A549 (cell line): ENCODE measurements at regions of chr2 and their contacts with region 1.

Region 1: DNA sequence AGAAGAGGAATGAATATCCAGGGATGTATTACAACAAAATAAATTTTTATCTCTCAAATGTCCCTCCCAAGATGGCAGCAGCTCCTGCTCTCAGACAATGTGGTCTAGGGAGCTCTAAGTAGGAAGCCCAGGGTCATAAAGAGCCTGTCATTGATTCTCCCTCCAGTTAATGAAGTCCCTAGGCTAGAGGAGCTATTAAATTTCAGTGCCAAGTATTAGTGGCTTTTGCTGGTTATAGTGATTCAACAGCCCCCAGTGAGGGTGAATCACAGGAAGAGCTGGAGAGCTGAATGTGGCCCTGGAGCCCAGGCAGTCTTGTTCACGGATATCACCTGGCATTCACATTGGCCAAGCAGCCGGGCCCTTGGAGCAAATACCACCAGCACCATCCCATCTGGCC is 109.8 kb upstream of the YPEL5 start:
- DNase-seq: no peak
- ATAC-seq: 0 out of 6 replicates have a peak, but pooled peaks of 1 of the 2 experiments have one; percentile 20
- H3K4me3 ChIP-seq: no peak overlapping the region
- H3K27ac ChIP-seq: no peak overlapping the region
- H3K4me1 ChIP-seq: no peaks in the 10 kb centered on the region
- CTCF ChIP-seq: no peak
- EP300 ChIP-seq: no peak
- POLR2A ChIP-seq: no peak
- RAD21 ChIP-seq: no peak

Region 2: GRCh38 chr2:29829841-29830240 is 207.2 kb before region 1 on chr2:
- CTCF ChIA-PET with region 1: no interaction called
- POLR2A ChIA-PET with region 1: no interaction called
- DNase-seq: no peak
- ATAC-seq: no peak
- H3K4me3 ChIP-seq: no peak overlapping the region
- H3K27ac ChIP-seq: no peak overlapping the region
- H3K4me1 ChIP-seq: no peaks in the 10 kb centered on the region
- CTCF ChIP-seq: no peak
- EP300 ChIP-seq: no peak
- POLR2A ChIP-seq: no peak
- RAD21 ChIP-seq: no peak

Region 3: DNA sequence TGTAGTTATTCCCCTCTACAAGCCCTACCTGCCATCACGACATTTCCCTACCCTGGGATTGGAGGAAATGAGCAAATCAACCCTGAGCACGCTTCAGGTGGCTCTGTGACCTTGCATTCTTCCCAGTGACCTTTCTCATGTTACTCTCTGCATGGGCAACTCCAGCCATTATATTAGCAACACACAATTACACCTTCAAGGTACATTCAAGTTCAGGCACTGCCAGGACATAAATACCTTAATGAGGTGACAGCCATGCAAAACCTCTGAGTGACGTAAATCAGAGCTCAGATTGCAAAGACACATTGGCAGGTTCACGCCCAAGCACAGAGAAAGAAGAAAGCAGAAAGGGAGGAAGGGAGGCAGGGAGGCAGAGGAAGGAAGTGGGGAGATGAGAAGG is 46.9 kb before region 1 on chr2:
- CTCF ChIA-PET with region 1: no interaction called
- POLR2A ChIA-PET with region 1: no interaction called
- DNase-seq: no peak
- ATAC-seq: no peak
- H3K4me3 ChIP-seq: no peak overlapping the region
- H3K27ac ChIP-seq: no peak overlapping the region
- H3K4me1 ChIP-seq: no peaks in the 10 kb centered on the region
- CTCF ChIP-seq: no peak
- EP300 ChIP-seq: no peak
- POLR2A ChIP-seq: no peak
- RAD21 ChIP-seq: no peak

Region 4: GRCh38 chr2:30026087-30027055 is 10.6 kb before region 1 on chr2:
- CTCF ChIA-PET with region 1: interaction called, 21 read pairs
- POLR2A ChIA-PET with region 1: no interaction called
- DNase-seq: peak; percentile 50 to 76
- ATAC-seq: peak; percentile 88 to 96
- H3K4me3 ChIP-seq: no peak overlapping the region
- H3K27ac ChIP-seq: no peak overlapping the region
- H3K4me1 ChIP-seq: no peaks in the 10 kb centered on the region
- CTCF ChIP-seq: peak; percentile 72
- EP300 ChIP-seq: no peak
- POLR2A ChIP-seq: no peak
- RAD21 ChIP-seq: peak; percentile 80 to 86

Region 5: GRCh38 chr2:30048636-30049180 is 11.7 kb after region 1 on chr2:
- CTCF ChIA-PET with region 1: interaction called, 13 read pairs
- POLR2A ChIA-PET with region 1: no interaction called
- DNase-seq: no peak
- ATAC-seq: no peak
- H3K4me3 ChIP-seq: no peak overlapping the region
- H3K27ac ChIP-seq: no peak overlapping the region
- H3K4me1 ChIP-seq: no peaks in the 10 kb centered on the region
- CTCF ChIP-seq: no peak
- EP300 ChIP-seq: no peak
- POLR2A ChIP-seq: no peak
- RAD21 ChIP-seq: no peak

Region 6: DNA sequence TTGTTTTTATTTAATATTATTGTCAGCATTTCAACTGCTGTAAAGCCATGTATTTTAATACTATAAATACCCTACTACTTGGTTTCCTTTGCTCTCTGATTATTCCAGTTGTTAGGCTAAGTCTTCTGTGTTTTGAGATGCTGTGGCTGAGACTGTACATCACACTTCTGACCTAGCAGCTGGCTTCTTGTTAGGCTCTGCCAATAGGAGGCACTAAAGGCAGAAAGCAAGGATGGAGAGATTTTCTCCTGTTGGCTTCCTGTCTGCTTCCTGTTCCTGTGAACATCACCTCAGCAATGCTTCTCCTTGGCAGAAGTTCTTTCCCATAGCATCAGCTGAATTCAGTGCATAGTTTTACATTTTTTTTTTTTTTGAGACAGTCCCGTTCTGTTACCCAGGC is 41.5 kb after region 1 on chr2:
- CTCF ChIA-PET with region 1: no interaction called
- POLR2A ChIA-PET with region 1: no interaction called
- DNase-seq: no peak
- ATAC-seq: 0 out of 6 replicates have a peak, but pooled peaks of 1 of the 2 experiments have one; percentile 34
- H3K4me3 ChIP-seq: no peak overlapping the region
- H3K27ac ChIP-seq: no peak overlapping the region
- H3K4me1 ChIP-seq: no peaks in the 10 kb centered on the region
- CTCF ChIP-seq: no peak
- EP300 ChIP-seq: no peak
- POLR2A ChIP-seq: no peak
- RAD21 ChIP-seq: no peak

Region 7: DNA sequence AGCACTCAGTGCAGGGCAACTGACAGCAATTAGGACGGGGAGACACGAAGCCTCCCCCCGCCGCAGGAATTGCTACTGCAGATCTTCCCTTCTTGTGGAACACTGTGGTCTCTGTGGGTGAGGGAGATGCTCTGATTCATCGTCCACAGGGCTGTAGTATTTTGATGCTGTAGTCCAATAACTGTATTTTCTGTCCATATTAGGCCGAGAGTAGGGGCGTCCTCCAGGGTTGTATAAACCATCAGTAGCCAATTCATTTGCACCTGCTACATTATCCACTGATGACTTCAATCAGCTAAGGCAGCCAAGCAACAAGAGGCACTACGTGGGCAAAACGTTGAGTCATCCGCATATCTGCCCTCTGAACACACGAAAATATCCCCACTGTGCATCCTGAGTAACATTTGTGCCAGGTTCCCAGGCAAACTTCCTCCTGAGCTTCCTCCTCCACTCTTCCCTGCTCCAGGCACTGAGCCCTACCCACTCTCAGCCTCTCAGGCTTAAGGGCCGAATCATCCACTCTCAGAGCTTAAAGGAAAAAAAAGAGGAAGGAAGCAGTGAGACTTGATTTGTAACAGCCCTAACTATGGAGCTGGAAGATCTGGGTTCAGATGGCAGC is 256.4 kb after region 1 on chr2:
- CTCF ChIA-PET with region 1: no interaction called
- POLR2A ChIA-PET with region 1: no interaction called
- DNase-seq: peak; percentile 40 to 94
- ATAC-seq: peak; percentile 88 to 93
- H3K4me3 ChIP-seq: no peak overlapping the region
- H3K27ac ChIP-seq: peak overlapping the region; percentile 72 to 85
- H3K4me1 ChIP-seq: peaks cover 40% of the 10 kb centered on the region
- CTCF ChIP-seq: no peak
- EP300 ChIP-seq: peak; percentile 73 to 83; a peak in 3 of 5 replicates
- POLR2A ChIP-seq: no peak
- RAD21 ChIP-seq: 0 out of 5 replicates have a peak, but pooled peaks of 1 of the 2 experiments have one; percentile 36